ENCODE measurements at regions of chr20 and their contacts with region 1.

Region 1: GRCh38 chr20:59087829-59088433 is 45.3 kb upstream of the PRELID3B start:
- DNase-seq: peak; percentile 81
- H3K4me3 ChIP-seq: no peak overlapping the region
- H3K27ac ChIP-seq: no peak overlapping the region
- H3K4me1 ChIP-seq: peaks cover 10% of the 10 kb centered on the region
- H3K27me3 ChIP-seq: peaks cover 4% of the 10 kb centered on the region
- CTCF ChIP-seq: peak; percentile 95

Region 2: DNA sequence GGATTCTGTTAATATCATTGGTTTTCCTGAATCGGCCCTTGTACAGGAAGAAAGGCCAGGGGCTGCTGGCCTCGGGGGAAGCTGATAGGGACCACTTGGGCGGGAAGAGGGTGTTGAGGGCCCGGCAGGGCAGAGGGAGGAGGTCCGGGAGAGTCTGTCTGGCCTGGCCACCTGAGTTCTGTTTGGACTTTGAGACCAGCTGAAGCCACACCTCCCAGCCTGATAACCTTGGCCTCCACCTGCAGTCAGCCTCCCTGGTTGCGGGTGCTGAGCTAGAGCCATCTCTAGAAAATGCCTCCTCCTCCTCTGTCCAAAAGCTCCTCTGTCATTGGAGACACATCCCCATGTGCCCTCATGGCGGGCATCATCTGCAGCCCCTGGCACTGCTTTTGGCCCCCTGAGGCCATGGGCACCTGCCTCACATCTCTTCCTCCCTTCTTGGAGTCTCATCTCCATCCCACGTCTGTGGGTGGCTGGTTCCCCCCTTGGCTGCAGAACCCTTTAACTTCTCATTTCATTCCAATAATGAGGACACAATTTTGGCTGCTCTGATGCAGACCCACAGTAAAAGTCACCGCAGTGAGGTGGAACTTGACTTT is 589.4 kb before region 1 on chr20:
- intact Hi-C with region 1: no loop called
- DNase-seq: no peak
- H3K4me3 ChIP-seq: no peak overlapping the region
- H3K27ac ChIP-seq: no peak overlapping the region
- H3K4me1 ChIP-seq: no peaks in the 10 kb centered on the region
- H3K27me3 ChIP-seq: no peaks in the 10 kb centered on the region
- CTCF ChIP-seq: no peak

Region 3: GRCh38 chr20:59222253-59223181 is 134.6 kb after region 1 on chr20:
- intact Hi-C with region 1: loop called (anchors 5 kb)
- DNase-seq: peak; percentile 83
- H3K4me3 ChIP-seq: peak overlapping the region; percentile 71
- H3K27ac ChIP-seq: peak overlapping the region; percentile 77
- H3K4me1 ChIP-seq: peaks cover 24% of the 10 kb centered on the region
- H3K27me3 ChIP-seq: peaks cover 55% of the 10 kb centered on the region
- CTCF ChIP-seq: peak; percentile 98